ENCODE measurements at regions of chr5 and their contacts with region 1.

Region 1: GRCh38 chr5:14706615-14707021 is 42.1 kb downstream of the OTULIN start:
- DNase-seq: peak; percentile 56
- H3K4me3 Mint-ChIP-seq: peak overlapping the region; percentile 57
- H3K27ac Mint-ChIP-seq: peak overlapping the region; percentile 94
- H3K4me1 Mint-ChIP-seq: peaks cover 74% of the 10 kb centered on the region
- H3K27me3 Mint-ChIP-seq: no peaks in the 10 kb centered on the region

Region 2: GRCh38 chr5:14720236-14720971 is 13.8 kb after region 1 on chr5:
- CTCF ChIA-PET with region 1: interaction called, 33 read pairs
- POLR2A ChIA-PET with region 1: no interaction called
- intact Hi-C with region 1: loop called (anchors 2 kb)
- DNase-seq: no peak
- H3K4me3 Mint-ChIP-seq: no peak overlapping the region
- H3K27ac Mint-ChIP-seq: peak overlapping the region; percentile 19
- H3K4me1 Mint-ChIP-seq: peaks cover 46% of the 10 kb centered on the region
- H3K27me3 Mint-ChIP-seq: no peaks in the 10 kb centered on the region

Region 3: DNA sequence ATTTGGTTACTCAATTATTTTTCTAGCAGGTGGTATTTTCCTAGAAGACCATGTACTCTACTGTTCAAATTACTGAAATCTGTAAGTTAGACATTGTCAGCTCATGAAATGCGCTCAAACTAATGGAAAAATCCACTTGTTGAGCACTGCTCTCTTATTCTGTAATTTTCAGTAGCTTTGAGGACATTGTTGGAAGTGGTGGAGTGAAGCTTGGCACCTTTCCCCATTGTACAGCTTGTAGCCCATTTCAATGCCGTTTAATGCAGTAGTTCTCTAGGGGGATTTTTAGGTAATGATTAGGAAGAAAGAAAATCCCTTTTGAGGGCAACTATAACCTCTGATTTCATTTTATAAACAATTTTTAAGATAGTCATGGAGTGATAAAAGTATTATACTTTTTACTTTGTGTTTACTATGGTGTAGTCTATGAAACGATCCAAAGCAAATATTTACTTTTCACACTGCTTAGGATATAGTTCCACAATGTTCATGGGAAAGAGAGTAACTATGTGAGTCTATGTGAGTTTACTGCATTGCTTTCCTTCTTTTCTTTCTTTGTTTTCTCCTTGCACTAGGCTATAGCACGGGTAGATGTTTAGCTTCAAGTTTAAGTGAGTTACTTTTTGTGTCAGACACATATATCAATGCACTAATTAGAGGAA is 330.8 kb after region 1 on chr5:
- CTCF ChIA-PET with region 1: no interaction called
- POLR2A ChIA-PET with region 1: no interaction called
- intact Hi-C with region 1: no loop called
- DNase-seq: no peak
- H3K4me3 Mint-ChIP-seq: no peak overlapping the region
- H3K27ac Mint-ChIP-seq: no peak overlapping the region
- H3K4me1 Mint-ChIP-seq: no peaks in the 10 kb centered on the region
- H3K27me3 Mint-ChIP-seq: peaks cover 6% of the 10 kb centered on the region